Cardiac septum (tissue), 1 donor: ENCODE measurements at regions of chr14 and their contacts with region 1.

Region 1: GRCh38 chr14:73728717-73729330 is 14.6 kb upstream of the PNMA1 start:
- DNase-seq: peak; percentile 94

Region 2: GRCh38 chr14:73526569-73526968 is 202.3 kb before region 1 on chr14:
- intact Hi-C with region 1: no loop called
- DNase-seq: no peak

Region 3: GRCh38 chr14:73675037-73675436 is 53.8 kb before region 1 on chr14:
- intact Hi-C with region 1: no loop called
- DNase-seq: no peak

Region 4: GRCh38 chr14:73759714-73760597 is 31.1 kb after region 1 on chr14:
- intact Hi-C with region 1: loop called (anchors 2 kb)
- DNase-seq: peak; percentile 99

Region 5: GRCh38 chr14:73825551-73826188 is 96.8 kb after region 1 on chr14:
- intact Hi-C with region 1: loop called (anchors 1 kb)
- DNase-seq: peak; percentile 94

Region 6: DNA sequence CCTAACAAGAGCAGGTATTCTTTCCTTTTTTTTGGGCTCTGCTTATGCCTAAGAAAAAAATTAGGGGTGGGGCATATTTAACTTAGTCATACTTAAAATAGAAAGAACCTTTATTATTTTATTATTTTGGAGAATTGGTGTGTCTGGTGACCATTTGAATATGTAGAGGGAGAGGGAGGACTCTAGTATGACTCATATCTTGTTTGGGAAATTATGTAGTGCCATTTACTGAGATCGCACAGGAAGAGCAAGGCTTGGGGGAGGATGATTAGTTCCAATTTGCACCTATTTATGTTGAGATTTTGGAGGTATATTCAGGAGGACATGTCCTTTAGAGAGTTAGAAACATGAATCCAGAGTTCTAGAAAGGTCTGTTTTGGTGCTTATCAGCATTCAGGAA is 167.7 kb after region 1 on chr14:
- intact Hi-C with region 1: no loop called
- DNase-seq: no peak

Region 7: GRCh38 chr14:73949744-73950734 is 221.2 kb after region 1 on chr14 and contains the starts of genes COQ6 and FAM161B:
- intact Hi-C with region 1: loop called (anchors 10 kb)
- DNase-seq: peak; percentile 95
- total RNA-seq, gene COQ6: 39.9 TPM
- total RNA-seq, gene FAM161B: 4.7 TPM